ENCODE measurements at regions of chr1 and their contacts with region 1.

Region 1: DNA sequence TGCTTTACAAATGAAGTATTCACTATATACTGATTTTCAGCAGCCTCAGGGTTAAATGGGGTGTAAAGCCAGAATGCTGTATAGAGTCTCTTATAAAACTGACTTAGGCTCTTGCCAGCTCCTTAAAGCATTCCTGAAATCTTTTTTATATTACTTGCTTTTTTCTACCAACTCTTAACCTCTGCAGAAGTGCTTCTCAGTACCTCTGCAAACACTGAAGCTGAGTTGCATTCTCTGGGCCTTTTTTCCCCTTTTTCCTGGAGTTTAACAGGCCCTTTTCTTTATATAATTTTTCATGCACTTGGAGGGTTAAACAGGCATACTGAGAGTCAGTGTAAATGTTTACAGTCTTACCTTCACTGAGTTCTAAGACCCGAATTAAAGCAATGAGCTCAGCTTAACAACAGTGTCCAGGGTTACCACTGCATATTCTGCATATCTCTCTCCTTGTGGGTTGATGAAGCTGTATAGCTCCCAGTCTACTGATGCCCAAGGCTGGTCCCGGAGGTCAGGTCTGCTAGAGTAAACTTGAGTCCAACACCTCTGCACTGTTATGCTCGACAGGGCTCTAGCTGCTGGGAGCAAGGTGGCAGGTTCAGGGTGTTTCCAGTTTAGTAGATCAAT is 40.9 kb upstream of the CFAP126 start:
- DNase-seq: no peak
- ATAC-seq: no peak
- H3K4me3 ChIP-seq: no peak overlapping the region
- H3K4me3 Mint-ChIP-seq: no peak overlapping the region
- H3K27ac ChIP-seq: no peak overlapping the region
- H3K27ac Mint-ChIP-seq: no peak overlapping the region
- H3K4me1 ChIP-seq: peaks cover 4% of the 10 kb centered on the region
- H3K4me1 Mint-ChIP-seq: peaks cover 33% of the 10 kb centered on the region
- H3K27me3 ChIP-seq: no peaks in the 10 kb centered on the region
- H3K27me3 Mint-ChIP-seq: no peaks in the 10 kb centered on the region
- CTCF ChIP-seq: no peak

Region 2: DNA sequence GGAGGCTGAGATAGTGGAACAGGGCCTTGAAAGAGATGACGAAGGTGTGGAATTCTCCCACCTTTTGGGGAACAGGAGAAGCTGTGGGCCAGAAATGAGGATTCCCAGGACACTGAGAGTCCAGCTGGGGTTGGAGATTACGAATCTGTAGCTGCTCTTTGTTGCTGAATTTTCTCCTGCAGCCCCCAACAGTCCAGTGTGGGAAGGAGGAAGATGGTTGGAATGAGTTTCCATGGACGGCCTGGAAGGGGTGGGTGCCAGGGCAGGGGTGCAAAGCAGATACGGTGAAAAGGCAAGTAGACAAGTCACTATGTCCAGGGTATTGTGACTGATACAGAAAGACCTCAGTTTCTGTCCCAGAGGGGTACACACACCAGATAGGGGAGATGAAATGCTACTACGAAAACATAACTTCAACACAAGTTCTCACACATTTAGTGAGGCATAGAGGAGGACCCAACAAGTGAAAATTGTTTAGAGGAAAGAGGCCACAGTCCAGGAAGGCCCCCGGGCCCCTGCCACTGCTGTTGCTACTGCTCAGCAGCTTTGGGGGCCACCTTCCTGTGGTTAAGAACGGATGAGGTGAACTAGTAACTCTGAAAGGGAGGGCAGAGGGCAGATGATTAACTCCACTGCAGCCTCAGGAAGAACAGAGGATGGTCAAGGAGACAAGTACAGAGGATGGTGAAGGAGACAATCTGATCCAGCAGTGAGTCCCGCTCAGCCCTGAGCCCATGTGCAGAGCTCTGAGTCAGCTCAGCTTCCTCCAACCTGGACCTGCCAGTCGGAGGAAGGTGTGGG is 553.2 kb before region 1 on chr1:
- CTCF ChIA-PET with region 1: no interaction called
- POLR2A ChIA-PET with region 1: no interaction called
- intact Hi-C with region 1: loop called in 1 of 2 experiments (anchors 5 kb)
- DNase-seq: peak in 6 of 9 experiments; percentile 19 to 72 (median 46)
- ATAC-seq: peak; percentile 68
- H3K4me3 ChIP-seq: peak overlapping the region; percentile 19 to 21
- H3K4me3 Mint-ChIP-seq: no peak overlapping the region
- H3K27ac ChIP-seq: peak overlapping the region in 1 of 2 experiments; percentile 66
- H3K27ac Mint-ChIP-seq: no peak overlapping the region
- H3K4me1 ChIP-seq: peaks cover 41% of the 10 kb centered on the region
- H3K4me1 Mint-ChIP-seq: peaks cover 31% of the 10 kb centered on the region
- H3K27me3 ChIP-seq: no peaks in the 10 kb centered on the region
- H3K27me3 Mint-ChIP-seq: no peaks in the 10 kb centered on the region
- CTCF ChIP-seq: no peak

Region 3: DNA sequence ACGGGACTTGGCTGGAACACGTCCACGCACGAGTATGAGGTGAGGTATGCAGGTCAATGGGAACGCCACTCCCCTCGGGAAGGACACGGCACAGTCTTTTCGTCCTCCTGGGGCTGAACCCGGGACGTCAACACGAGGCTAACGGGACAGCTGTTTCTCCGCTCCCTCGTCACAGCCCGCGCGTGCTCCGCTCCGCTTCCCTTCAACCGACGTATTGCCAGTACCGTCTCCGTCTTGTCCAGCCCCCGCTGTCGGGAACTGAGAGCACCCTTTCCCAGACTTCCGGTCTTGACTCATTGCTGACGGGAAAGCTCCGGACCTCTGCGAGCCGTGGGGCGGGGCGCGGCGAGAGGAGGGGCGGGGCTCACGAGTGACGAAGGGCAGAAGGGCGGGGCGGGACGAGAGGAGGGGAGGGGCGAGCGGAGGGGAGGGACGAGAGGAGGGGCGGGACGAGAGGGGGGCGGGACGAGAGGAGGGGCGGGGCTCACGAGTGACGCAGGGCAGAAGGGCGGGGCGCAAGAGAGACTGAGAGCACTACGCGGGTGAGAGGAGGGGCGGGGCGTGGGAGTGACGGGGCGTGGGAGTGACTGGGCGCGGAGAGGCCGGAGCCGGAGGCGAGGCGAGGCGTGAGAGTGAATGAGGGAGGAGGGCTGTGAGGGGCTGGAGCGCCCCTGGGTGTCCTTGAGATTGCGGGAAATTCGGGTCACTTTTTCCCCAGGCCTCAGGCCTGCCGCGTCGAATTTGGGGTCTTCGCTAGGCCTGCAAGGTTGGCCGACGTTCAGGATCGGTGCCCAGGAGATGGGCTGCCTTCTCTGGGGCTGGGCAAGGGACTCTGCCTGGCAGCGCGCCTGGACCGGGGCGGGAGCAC is 18.6 kb before region 1 on chr1:
- CTCF ChIA-PET with region 1: no interaction called
- POLR2A ChIA-PET with region 1: no interaction called
- intact Hi-C with region 1: no loop called
- DNase-seq: peak; percentile 85 to 97 (median 96)
- ATAC-seq: peak; percentile 90
- H3K4me3 ChIP-seq: peak overlapping the region; percentile 76 to 96
- H3K4me3 Mint-ChIP-seq: peak overlapping the region; percentile 92
- H3K27ac ChIP-seq: peak overlapping the region; percentile 85 to 97
- H3K27ac Mint-ChIP-seq: peak overlapping the region; percentile 99
- H3K4me1 ChIP-seq: peaks cover 19% of the 10 kb centered on the region
- H3K4me1 Mint-ChIP-seq: peaks cover 26% of the 10 kb centered on the region
- H3K27me3 ChIP-seq: no peaks in the 10 kb centered on the region
- H3K27me3 Mint-ChIP-seq: no peaks in the 10 kb centered on the region
- CTCF ChIP-seq: no peak

Measured in CD8-positive, alpha-beta T cell (primary cell).